Pancreas (tissue), 10 donors: ENCODE measurements at regions of chr11 and their contacts with region 1.

Region 1: GRCh38 chr11:35138943-35139721 is at the start of gene CD44:
- DNase-seq: peak; percentile 75 to 84 (median 77)
- ATAC-seq: peak; percentile 74 to 82 (median 78)
- H3K4me3 ChIP-seq: peak within 1 kb of the TSS; percentile 49 to 92 (median 77)
- H3K27ac ChIP-seq: peak within 1 kb of the TSS; percentile 77 to 95 (median 86)
- H3K4me1 ChIP-seq: peaks cover 1 to 34% (median 11%) of the 10 kb centered on the region in 3 donors
- H3K27me3 ChIP-seq: no peaks in the 10 kb centered on the region
- CTCF ChIP-seq: no peak
- total RNA-seq, gene CD44: 343 to 677 (median 391) TPM

Region 2: GRCh38 chr11:35006389-35007128 is 132.6 kb before region 1 on chr11:
- intact Hi-C with region 1: loop called in 2 of 3 experiments (anchors 10 kb)
- DNase-seq: no peak
- ATAC-seq: no peak
- H3K4me3 ChIP-seq: no peak overlapping the region
- H3K27ac ChIP-seq: peak overlapping the region; percentile 10 to 85 (median 59)
- H3K4me1 ChIP-seq: peaks cover 40 to 56% (median 55%) of the 10 kb centered on the region in 3 donors
- H3K27me3 ChIP-seq: no peaks in the 10 kb centered on the region
- CTCF ChIP-seq: no peak